A673 (cell line): ENCODE measurements at regions of chr6 and their contacts with region 1.

Region 1: GRCh38 chr6:152948150-152948768 is 34.6 kb downstream of the FBXO5 start:
- DNase-seq: peak; percentile 60
- H3K4me3 ChIP-seq: no peak overlapping the region
- H3K27ac ChIP-seq: no peak overlapping the region
- H3K4me1 ChIP-seq: no peaks in the 10 kb centered on the region
- H3K27me3 ChIP-seq: peaks cover 61% of the 10 kb centered on the region
- CTCF ChIP-seq: peak; percentile 77

Region 2: DNA sequence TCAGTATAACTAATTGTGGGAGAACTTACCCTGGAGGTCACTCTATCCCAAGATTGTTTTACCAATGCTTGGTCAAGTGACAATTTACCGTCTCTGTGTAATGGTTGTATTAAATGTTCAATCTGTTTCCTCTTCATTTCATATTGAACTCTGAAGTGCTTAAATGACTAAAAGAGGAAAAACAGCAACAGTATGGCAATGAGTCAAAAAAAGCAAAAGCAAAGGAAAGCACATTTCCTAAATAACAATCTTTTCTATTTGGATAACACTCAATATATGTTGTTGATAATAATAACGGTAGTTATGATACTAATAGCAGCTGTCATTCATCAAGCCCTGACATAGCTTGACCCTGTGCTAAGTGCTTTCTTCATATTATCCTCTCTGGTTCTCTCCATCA is 463.5 kb before region 1 on chr6:
- CTCF ChIA-PET with region 1: interaction called, 4 read pairs
- POLR2A ChIA-PET with region 1: no interaction called
- intact Hi-C with region 1: loop called (anchors 5 kb)
- DNase-seq: no peak
- H3K4me3 ChIP-seq: no peak overlapping the region
- H3K27ac ChIP-seq: no peak overlapping the region
- H3K4me1 ChIP-seq: no peaks in the 10 kb centered on the region
- H3K27me3 ChIP-seq: no peaks in the 10 kb centered on the region
- CTCF ChIP-seq: no peak

Region 3: GRCh38 chr6:152750694-152751093 is 197.6 kb before region 1 on chr6 and contains the start of gene VIP:
- CTCF ChIA-PET with region 1: interaction called, 4 read pairs
- POLR2A ChIA-PET with region 1: no interaction called
- intact Hi-C with region 1: loop called (anchors 1 kb)
- DNase-seq: peak; percentile 56
- H3K4me3 ChIP-seq: no peak within 1 kb of the TSS
- H3K27ac ChIP-seq: no peak within 1 kb of the TSS
- H3K4me1 ChIP-seq: no peaks in the 10 kb centered on the region
- H3K27me3 ChIP-seq: peaks cover 6% of the 10 kb centered on the region
- CTCF ChIP-seq: no peak
- total RNA-seq, gene VIP: not detected in 2 replicates

Region 4: DNA sequence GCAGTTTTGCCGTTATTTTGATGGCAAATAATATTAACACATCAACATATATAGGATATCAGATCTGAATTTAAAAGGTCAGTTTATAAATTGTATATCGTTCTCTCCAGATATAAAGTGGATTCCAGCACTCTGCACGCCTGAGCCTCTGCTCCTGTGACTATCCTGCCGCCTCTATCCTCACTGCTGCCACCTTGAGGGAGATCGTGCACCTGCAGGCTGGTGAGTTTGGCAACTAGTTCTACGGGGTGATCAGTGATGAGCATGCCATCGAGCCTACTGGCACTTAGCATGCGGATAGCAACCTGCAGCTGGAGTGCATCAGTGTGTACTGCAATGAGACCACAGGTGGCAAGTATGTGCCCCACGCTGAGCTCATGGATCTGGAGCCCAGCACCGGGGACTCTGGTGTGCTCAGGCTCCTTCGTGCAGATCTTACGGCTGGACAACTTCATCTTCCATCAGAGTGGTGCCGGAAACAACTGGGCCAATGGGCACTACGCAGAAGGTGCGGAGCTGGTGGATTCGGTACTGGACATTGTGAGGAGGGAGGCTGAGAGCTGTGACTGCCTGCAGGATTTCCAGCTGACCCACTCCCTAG is 50.4 kb before region 1 on chr6:
- CTCF ChIA-PET with region 1: no interaction called
- POLR2A ChIA-PET with region 1: no interaction called
- intact Hi-C with region 1: loop called (anchors 2 kb)
- DNase-seq: peak; percentile 77
- H3K4me3 ChIP-seq: no peak overlapping the region
- H3K27ac ChIP-seq: no peak overlapping the region
- H3K4me1 ChIP-seq: no peaks in the 10 kb centered on the region
- H3K27me3 ChIP-seq: peaks cover 36% of the 10 kb centered on the region
- CTCF ChIP-seq: peak; percentile 90

Region 5: GRCh38 chr6:153002607-153003365 is 54.5 kb after region 1 on chr6 and contains the start of gene MTRF1L:
- CTCF ChIA-PET with region 1: no interaction called
- POLR2A ChIA-PET with region 1: no interaction called
- intact Hi-C with region 1: no loop called
- DNase-seq: peak; percentile 99
- H3K4me3 ChIP-seq: peak within 1 kb of the TSS; percentile 84
- H3K27ac ChIP-seq: peak within 1 kb of the TSS; percentile 83
- H3K4me1 ChIP-seq: peaks cover 14% of the 10 kb centered on the region
- H3K27me3 ChIP-seq: no peaks in the 10 kb centered on the region
- CTCF ChIP-seq: no peak
- total RNA-seq, gene MTRF1L: 25.2 and 30.9 TPM in 2 replicates